Breast epithelium (tissue), 4 donors: ENCODE measurements at regions of chr17 and their contacts with region 1.

Region 1: GRCh38 chr17:39621523-39622379 is 5.0 kb upstream of the PPP1R1B start:
- DNase-seq: peak; percentile 84 to 93
- H3K4me3 ChIP-seq: no peak overlapping the region
- H3K27ac ChIP-seq: no peak overlapping the region
- H3K4me1 ChIP-seq: peaks cover 4 to 23% of the 10 kb centered on the region in 2 donors
- H3K27me3 ChIP-seq: no peaks in the 10 kb centered on the region
- CTCF ChIP-seq: peak; percentile 99 to 100 (median 100)
- POLR2A ChIP-seq: no peak

Region 2: DNA sequence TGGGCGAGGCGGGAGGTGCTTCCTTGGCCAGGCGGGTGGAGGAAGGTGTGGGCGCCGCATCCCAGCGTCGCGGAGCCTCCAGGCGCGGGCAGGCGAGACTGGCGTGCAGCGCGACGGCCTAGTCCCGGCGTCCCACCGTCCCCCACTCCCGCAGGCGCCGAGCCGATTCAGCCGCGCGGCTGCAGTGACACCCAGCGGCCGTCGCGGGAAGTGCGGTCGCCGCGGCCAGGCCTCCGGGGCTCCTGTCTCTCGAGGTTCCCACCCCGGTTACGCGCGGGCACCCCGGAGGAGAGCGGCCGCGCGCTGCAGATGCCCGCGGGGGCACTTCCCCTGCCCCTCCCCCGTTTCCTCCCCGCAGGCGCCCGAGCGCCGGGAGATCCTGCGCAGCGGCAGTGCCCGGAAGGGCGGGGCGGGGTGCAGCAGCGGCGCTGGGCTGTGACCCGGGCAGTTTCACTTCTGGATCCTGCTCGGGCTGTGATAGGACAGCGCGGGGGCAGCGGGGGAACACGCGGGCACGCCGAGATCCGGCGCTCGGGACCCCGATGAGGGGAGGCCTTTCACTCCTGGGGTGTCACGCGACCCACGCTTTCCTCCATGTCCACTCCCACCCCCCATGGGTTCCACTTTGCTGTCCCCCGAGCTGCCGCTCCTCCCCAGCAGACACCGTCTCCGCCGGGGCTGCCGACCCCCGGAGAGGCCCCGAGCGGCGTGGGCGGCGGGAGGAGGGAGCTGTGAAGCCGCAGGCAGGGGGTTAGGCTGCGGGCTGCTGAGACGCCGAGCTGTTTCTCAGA is 132.6 kb after region 1 on chr17:
- intact Hi-C with region 1: loop called (anchors 10 kb)
- DNase-seq: peak; percentile 80 to 81
- H3K4me3 ChIP-seq: peak overlapping the region; percentile 66 to 96 (median 70)
- H3K27ac ChIP-seq: peak overlapping the region; percentile 87 to 97
- H3K4me1 ChIP-seq: peaks cover 0 to 9% of the 10 kb centered on the region in 2 donors
- H3K27me3 ChIP-seq: no peaks in the 10 kb centered on the region
- CTCF ChIP-seq: peak; percentile 96 to 100 (median 97)
- POLR2A ChIP-seq: peak; percentile 45